Activated naive CD4-positive, alpha-beta T cell treated with anti-CD3 and anti-CD28 coated beads, Interleukin-2, amount 10 ng/mL, durations not matched to agents 7 days and 5 days (primary cell): ENCODE measurements at regions of chr3 and their contacts with region 1.

Region 1: GRCh38 chr3:113287803-113288648 is 76.7 kb downstream of the BOC start:
- DNase-seq: peak; percentile 66
- H3K4me3 Mint-ChIP-seq: no peak overlapping the region
- H3K27ac Mint-ChIP-seq: no peak overlapping the region
- H3K4me1 Mint-ChIP-seq: no peaks in the 10 kb centered on the region
- H3K27me3 Mint-ChIP-seq: peaks cover 3% of the 10 kb centered on the region

Region 2: GRCh38 chr3:113051302-113051711 is 236.7 kb before region 1 on chr3:
- CTCF ChIA-PET with region 1: interaction called, 18 read pairs
- DNase-seq: peak; percentile 91
- H3K4me3 Mint-ChIP-seq: no peak overlapping the region
- H3K27ac Mint-ChIP-seq: no peak overlapping the region
- H3K4me1 Mint-ChIP-seq: peaks cover 2% of the 10 kb centered on the region
- H3K27me3 Mint-ChIP-seq: no peaks in the 10 kb centered on the region

Region 3: DNA sequence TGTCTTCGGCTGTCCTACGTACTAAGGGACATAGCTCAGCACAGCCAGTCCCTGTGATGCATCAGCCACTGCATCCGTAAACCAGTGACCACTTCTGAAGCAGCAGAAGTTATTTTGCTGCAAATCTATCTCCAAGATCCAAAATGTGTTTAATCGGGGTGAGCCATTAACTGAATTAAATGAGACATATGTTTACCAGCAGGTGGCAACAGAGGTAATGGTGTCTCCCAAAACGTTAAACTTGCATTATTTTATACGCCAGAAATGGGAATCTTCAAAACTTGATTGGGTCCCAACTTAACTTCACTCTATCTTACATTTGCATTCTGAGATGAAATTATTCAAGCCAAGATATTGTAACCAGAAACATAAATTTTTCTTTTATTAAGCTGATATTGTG is 152.0 kb before region 1 on chr3:
- CTCF ChIA-PET with region 1: interaction called, 34 read pairs
- DNase-seq: no peak
- H3K4me3 Mint-ChIP-seq: no peak overlapping the region
- H3K27ac Mint-ChIP-seq: no peak overlapping the region
- H3K4me1 Mint-ChIP-seq: no peaks in the 10 kb centered on the region
- H3K27me3 Mint-ChIP-seq: peaks cover 3% of the 10 kb centered on the region